Naive thymus-derived CD8-positive, alpha-beta T cell (primary cell): ENCODE measurements at regions of chr11 and their contacts with region 1.

Region 1: GRCh38 chr11:47407746-47408590 is at the start of gene SLC39A13:
- DNase-seq: peak; percentile 79 to 93 (median 90)
- ATAC-seq: peak; percentile 86 to 91
- H3K4me3 Mint-ChIP-seq: peak within 1 kb of the TSS; percentile 89 to 96 (median 92)
- H3K27ac Mint-ChIP-seq: peak within 1 kb of the TSS; percentile 92 to 97 (median 96)
- H3K4me1 Mint-ChIP-seq: peaks cover 5 to 30% (median 26%) of the 10 kb centered on the region in 4 donors
- H3K27me3 Mint-ChIP-seq: no peaks in the 10 kb centered on the region
- polyA plus RNA-seq, gene SLC39A13: 23.8 to 41.9 (median 24.4) TPM

Region 2: DNA sequence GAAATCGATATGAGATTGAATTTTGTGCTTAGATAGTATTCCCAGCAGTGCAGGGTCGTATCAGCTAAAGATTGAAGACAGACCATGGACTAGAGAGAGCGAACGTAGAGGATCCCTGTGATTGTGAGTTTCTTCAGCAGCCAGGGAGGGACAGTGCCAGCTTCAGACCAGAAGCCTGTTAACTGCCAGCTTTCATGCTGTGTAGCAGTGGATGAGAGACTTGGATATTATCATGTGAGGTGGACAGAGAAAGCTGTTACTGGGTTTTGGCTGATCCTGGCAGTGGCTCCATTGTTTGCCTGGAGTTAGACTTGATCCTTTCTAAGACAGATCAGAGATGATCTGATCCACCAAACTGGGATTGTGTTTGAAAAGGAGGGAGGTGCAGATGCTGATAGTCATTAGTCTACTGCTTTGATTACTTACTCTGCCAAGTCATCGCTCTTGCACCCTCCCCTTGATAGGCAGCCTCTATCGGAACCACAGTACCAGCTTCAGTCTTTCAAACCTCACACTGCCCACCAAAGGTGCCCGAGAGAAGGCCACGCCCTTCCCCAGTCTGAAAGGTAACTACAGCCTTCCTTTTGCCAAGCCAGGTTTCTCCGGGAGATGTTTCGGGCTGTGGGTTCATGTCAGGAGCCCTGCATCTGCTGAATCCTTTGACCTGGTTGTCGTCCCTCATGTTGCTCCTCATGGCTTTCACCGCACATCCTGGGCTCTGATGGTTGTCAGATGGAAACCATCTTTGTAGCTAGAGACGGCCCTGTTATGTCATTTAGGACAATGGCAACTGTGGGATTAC is 121.8 kb before region 1 on chr11:
- POLR2A ChIA-PET with region 1: no interaction called
- DNase-seq: no peak
- ATAC-seq: no peak
- H3K4me3 Mint-ChIP-seq: no peak overlapping the region
- H3K27ac Mint-ChIP-seq: peak overlapping the region in 2 of 10 donors; percentile 17 to 23
- H3K4me1 Mint-ChIP-seq: peaks cover 0 to 8% (median under 1%) of the 10 kb centered on the region in 4 donors
- H3K27me3 Mint-ChIP-seq: no peaks in the 10 kb centered on the region

Region 3: DNA sequence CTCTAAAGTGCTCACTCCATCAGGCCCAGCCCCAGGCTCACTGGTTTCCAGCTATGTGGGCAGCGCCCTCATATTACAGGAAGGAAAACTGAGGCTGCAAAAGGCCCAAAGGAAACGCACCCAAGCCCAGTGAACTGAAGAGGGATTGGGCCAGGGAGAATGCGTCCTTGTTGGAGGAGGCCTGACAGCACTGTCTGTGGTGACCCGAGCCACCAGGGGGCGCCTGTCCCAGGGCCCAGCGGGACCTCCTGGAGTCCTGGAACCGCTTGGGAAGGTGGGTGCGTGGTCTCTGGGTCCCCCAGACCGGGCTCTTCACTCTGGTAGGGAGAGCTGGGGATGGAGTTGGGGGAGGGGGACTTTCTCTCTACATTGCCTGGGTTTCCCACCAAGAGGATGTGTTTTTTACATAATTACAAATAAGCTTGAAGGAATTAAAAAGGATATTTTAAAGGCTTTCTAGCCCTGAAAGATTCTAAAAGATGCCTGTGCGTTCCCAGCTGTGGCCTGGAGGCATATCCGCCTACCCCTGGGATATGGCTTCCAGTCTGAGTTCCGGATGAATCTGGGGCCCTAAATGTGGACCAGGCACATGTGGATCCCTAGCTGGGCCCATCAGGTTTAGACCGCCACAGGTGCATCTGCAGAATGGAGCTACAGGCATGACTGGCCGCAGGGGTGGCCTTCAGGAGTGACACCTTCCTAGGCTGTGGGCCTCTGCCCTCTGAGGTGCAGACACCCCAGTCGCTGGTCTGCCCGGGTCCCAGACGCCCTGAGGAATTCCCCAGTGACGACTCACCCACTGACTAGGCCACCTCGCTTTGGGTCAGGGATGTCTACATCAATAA is 33.9 kb before region 1 on chr11:
- POLR2A ChIA-PET with region 1: interaction called, 57 read pairs
- DNase-seq: peak; percentile 67 to 92 (median 84)
- ATAC-seq: peak; percentile 96 to 99
- H3K4me3 Mint-ChIP-seq: no peak overlapping the region
- H3K27ac Mint-ChIP-seq: peak overlapping the region in 5 of 10 donors; percentile 13 to 72 (median 53)
- H3K4me1 Mint-ChIP-seq: peaks cover 4 to 23% (median 8%) of the 10 kb centered on the region in 4 donors
- H3K27me3 Mint-ChIP-seq: no peaks in the 10 kb centered on the region

Region 4: GRCh38 chr11:47394322-47395222 is 13.4 kb before region 1 on chr11:
- POLR2A ChIA-PET with region 1: interaction called, 147 read pairs
- DNase-seq: peak in 6 of 10 donors; percentile 16 to 64 (median 40)
- ATAC-seq: peak; percentile 81 to 90
- H3K4me3 Mint-ChIP-seq: peak overlapping the region; percentile 59 to 85 (median 74)
- H3K27ac Mint-ChIP-seq: peak overlapping the region; percentile 91 to 96 (median 94)
- H3K4me1 Mint-ChIP-seq: peaks cover 21 to 83% (median 68%) of the 10 kb centered on the region in 4 donors
- H3K27me3 Mint-ChIP-seq: no peaks in the 10 kb centered on the region

Region 5: DNA sequence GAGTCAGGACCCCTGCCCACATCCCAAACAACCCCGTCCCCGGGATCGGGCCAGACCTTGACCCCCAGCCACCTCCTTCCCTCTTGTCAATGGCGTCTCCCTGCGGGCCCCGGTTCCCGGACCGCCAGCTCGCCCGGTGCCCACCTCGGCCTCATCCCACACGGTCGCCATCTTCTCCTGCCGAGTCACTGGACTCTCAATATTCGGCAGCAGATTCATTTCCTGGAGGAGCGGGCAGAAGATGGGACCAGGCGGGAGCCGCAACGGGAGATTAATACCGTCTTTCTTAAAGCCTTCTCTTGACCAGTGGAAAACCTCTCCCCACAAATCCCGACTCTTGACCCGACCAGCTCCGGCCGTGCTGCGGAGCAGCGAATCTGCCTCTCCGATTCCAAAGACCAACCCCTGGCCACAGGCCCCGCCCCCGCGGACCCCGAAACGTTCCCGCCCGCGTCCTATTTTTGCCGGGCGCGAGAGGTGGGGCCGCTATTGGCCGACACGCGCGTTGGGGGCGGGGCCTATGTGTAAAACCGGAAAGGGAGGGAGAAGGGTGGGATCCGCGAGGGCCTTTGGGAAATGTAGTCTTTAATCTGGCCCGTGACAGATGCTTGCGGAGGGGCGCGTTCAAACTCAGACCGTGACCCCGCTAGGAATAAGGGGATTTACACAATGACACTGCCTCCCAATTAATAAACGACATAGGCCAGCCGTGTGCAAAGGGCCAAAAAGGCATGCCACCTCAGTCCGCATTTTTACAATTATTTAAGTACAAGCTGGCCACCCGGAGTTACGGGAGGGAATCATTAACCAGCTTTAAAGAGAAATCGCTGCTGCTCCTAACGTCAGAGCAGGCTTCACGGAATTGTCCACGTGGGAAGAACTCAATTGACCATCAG is 18.3 kb after region 1 on chr11 and contains the start of gene PSMC3:
- POLR2A ChIA-PET with region 1: interaction called, 36 read pairs
- DNase-seq: peak; percentile 94 to 99 (median 98)
- ATAC-seq: peak; percentile 96 to 97
- H3K4me3 Mint-ChIP-seq: peak within 1 kb of the TSS; percentile 98 to 100 (median 99)
- H3K27ac Mint-ChIP-seq: peak within 1 kb of the TSS; percentile 97 to 100 (median 98)
- H3K4me1 Mint-ChIP-seq: peaks cover 13 to 30% (median 29%) of the 10 kb centered on the region in 4 donors
- H3K27me3 Mint-ChIP-seq: no peaks in the 10 kb centered on the region
- polyA plus RNA-seq, gene PSMC3: 91.5 to 106 (median 94.0) TPM

Region 6: DNA sequence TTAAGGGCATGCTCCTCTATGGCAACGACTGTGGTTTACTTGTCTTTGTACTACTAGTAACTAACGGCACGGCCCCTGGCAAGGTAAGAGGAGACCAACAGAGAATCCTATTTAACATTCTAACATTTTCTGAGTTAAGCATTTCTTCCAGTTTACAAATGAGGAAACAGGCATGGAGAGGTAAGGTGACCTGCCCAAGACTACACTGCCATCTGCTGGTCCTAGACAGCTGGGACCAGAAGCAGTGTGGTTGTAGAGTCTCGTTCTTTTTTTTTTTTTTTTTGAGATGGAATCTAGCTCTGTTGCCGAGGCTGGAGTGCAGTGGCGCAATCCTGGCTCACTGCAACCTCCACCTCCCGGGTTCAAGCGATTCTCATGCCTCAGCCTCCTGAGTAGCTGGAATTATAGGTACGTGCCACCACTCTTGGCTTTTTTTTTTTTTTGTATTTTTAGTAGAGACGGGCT is 46.2 kb after region 1 on chr11:
- POLR2A ChIA-PET with region 1: no interaction called
- DNase-seq: peak; percentile 40 to 87 (median 64)
- ATAC-seq: peak; percentile 97 to 99
- H3K4me3 Mint-ChIP-seq: no peak overlapping the region
- H3K27ac Mint-ChIP-seq: peak overlapping the region in 3 of 10 donors; percentile 16 to 56 (median 22)
- H3K4me1 Mint-ChIP-seq: peaks cover 0 to 7% (median 4%) of the 10 kb centered on the region in 4 donors
- H3K27me3 Mint-ChIP-seq: no peaks in the 10 kb centered on the region